Right ventricle myocardium inferior (tissue), 1 donor: ENCODE measurements at regions of chr4 and their contacts with region 1.

Region 1: DNA sequence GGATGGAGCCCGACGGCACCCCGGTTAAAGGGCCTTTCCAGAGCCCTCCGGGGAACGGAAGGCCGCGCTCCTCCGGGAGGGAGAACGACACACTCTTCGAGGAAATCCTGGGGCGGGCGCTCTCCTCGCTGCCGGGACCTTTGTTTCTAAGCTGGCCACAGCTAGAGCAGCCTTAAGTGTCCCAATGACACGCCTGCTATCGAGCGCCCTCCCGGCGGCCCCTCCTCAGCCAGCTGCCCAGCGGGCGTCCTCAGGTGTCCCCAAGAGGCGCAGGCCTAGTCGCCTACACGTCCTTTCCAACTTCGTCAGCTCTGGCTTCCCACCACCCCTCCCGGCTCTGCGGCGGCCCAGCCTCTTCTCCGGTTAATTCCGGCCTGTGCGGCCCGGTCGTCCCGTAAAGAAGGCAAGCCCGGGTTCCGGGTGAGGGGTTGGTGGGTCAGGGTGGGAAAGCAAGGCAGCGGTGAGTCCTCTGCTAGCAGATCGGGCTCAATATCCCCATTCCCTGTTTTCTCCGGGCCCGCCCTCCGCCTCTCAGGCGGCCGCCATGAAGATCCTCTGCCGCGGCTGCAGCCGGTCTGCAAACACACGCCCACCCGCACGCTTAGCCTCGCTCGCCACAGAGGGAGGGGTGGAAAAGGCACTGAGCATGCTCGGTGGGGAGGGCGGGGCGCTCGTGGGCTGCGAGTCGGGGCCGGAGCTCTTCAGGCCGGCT is 449 bp upstream of the RAP1GDS1 start:
- DNase-seq: peak; percentile 97
- ATAC-seq: peak; percentile 99

Region 2: DNA sequence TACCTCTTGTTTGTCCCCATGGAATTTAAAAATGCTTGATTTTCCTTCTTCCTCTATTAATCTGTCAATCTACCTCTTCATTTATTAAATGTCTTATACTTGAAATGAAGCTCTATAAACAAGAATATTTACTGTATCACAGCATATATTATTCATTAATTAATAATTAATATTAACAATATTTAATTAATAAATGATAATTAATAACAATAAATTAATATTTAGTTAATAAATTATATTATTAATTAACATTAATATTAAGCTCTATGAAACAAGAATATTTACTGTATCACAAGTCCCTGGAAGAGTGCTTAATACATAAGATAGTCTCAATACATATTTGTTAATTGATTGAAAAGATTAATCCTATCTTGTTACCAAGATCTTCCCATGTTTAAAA is 424.1 kb before region 1 on chr4:
- intact Hi-C with region 1: no loop called
- DNase-seq: no peak
- ATAC-seq: no peak

Region 3: GRCh38 chr4:98143001-98143899 is 117.5 kb before region 1 on chr4 and contains the start of gene STPG2:
- intact Hi-C with region 1: loop called (anchors 1 kb)
- DNase-seq: peak; percentile 96
- ATAC-seq: peak; percentile 100
- total RNA-seq, gene STPG2: 0.43 TPM

Region 4: GRCh38 chr4:98199209-98199608 is 61.5 kb before region 1 on chr4:
- intact Hi-C with region 1: loop called (anchors 2 kb)
- DNase-seq: no peak
- ATAC-seq: peak; percentile 86

Region 5: DNA sequence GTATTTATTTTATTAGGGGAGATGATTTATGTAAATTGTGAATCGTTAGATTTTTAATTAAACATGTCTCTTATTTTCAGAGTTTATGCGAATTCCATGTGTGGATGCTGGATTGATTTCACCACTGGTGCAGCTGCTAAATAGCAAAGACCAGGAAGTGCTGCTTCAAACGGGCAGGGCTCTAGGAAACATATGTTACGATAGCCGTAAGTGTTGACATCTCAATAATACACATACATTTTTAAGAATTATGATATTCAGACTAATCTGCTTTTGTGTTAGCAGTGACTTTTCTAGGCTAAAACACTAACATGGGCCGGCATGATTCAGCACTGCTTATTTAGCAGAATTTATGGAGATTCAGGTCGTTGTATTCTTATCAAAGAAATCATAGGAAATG is 91.7 kb after region 1 on chr4:
- intact Hi-C with region 1: loop called (anchors 10 kb)
- DNase-seq: no peak
- ATAC-seq: no peak

Region 6: GRCh38 chr4:98995183-98996055 is 734.7 kb after region 1 on chr4 and contains the start of gene METAP1:
- intact Hi-C with region 1: loop called (anchors 5 kb)
- DNase-seq: peak; percentile 97
- ATAC-seq: peak; percentile 96
- total RNA-seq, gene METAP1: 67.4 TPM